MCF 10A (cell line): ENCODE measurements at regions of chr18 and their contacts with region 1.

Region 1: DNA sequence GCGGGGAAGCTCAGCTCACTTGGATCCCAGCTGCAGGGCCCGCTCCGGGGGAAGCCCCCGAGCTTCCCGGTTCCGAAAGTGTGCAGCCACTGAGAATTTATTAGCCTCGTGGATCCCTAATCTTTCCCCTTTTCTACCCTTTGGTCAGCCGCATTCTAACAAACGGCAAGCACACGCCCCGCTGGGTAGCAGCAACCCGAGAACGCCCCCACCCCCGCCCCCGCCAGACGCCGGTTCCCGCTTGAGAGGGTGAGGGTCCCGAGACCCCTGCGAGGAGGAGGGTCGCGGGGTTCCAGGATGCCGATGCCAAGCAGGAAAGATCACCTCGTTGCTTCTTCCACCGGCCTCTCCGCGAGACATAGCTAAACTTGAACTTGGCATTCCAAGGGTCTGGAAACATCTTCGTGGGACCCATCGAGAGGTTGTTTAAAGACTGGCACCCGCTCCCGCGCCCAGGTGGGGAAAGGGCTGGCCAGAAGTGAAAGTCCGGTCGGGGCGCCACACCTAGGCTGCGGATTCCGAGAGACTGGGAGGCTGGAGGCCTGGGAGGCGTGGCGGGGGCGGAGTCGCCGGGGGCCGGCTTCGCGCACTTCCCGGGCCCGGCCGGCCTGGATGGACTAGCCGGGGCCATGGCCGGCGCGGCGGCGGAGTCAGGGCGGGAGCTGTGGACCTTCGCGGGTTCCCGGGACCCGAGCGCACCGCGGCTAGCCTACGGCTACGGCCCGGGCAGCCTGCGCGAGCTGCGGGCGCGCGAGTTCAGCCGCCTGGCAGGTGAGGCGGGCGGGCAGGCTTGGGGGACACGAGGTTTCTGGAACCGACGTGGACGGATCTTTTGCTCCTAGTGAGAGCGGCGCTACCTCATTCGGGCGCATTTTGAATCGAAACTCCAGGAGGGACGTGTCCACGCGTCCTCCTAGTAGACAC is at the start of gene MOCOS:
- DNase-seq: peak; percentile 86
- H3K4me3 Mint-ChIP-seq: peak within 1 kb of the TSS; percentile 96
- H3K27ac Mint-ChIP-seq: peak within 1 kb of the TSS; percentile 89
- H3K4me1 Mint-ChIP-seq: peaks cover 34% of the 10 kb centered on the region
- H3K27me3 Mint-ChIP-seq: no peaks in the 10 kb centered on the region
- CTCF ChIP-seq: no peak
- total RNA-seq, gene MOCOS: 69.1 and 81.1 TPM in 2 replicates

Region 2: GRCh38 chr18:36162981-36163380 is 24.2 kb before region 1 on chr18:
- CTCF ChIA-PET with region 1: interaction called, 4 read pairs
- POLR2A ChIA-PET with region 1: interaction called, 6 read pairs
- intact Hi-C with region 1: loop called (anchors 2 kb)
- DNase-seq: no peak
- H3K4me3 Mint-ChIP-seq: no peak overlapping the region
- H3K27ac Mint-ChIP-seq: no peak overlapping the region
- H3K4me1 Mint-ChIP-seq: no peaks in the 10 kb centered on the region
- H3K27me3 Mint-ChIP-seq: no peaks in the 10 kb centered on the region
- CTCF ChIP-seq: no peak

Region 3: DNA sequence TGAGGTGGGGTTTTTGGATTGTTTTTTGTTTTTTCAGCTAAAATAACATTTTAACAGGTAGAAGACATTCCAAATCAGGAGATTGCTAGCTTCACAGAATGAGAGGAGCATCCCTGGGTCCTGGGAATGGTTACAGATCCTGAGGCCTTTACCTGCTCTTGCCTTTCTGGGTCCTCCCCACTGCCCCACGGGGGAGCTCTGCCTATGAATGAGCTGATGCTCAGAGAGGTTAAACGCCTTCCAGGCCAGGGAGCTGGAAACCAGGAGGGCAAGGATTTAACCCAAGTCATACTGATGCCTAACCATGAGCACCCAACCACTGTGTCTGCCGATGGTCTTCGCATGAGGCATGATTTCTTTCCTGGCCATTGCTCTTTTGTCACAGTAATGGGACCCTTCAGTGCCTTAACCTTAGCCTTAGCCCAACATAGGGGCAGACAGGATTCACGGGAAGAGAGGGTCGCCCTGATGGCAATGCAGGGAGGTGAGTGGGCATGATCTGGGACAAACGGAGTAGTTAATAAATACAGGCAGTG is 16.3 kb after region 1 on chr18:
- CTCF ChIA-PET with region 1: interaction called, 5 read pairs
- POLR2A ChIA-PET with region 1: interaction called, 15 read pairs
- intact Hi-C with region 1: no loop called
- DNase-seq: no peak
- H3K4me3 Mint-ChIP-seq: no peak overlapping the region
- H3K27ac Mint-ChIP-seq: no peak overlapping the region
- H3K4me1 Mint-ChIP-seq: no peaks in the 10 kb centered on the region
- H3K27me3 Mint-ChIP-seq: no peaks in the 10 kb centered on the region
- CTCF ChIP-seq: no peak

Region 4: DNA sequence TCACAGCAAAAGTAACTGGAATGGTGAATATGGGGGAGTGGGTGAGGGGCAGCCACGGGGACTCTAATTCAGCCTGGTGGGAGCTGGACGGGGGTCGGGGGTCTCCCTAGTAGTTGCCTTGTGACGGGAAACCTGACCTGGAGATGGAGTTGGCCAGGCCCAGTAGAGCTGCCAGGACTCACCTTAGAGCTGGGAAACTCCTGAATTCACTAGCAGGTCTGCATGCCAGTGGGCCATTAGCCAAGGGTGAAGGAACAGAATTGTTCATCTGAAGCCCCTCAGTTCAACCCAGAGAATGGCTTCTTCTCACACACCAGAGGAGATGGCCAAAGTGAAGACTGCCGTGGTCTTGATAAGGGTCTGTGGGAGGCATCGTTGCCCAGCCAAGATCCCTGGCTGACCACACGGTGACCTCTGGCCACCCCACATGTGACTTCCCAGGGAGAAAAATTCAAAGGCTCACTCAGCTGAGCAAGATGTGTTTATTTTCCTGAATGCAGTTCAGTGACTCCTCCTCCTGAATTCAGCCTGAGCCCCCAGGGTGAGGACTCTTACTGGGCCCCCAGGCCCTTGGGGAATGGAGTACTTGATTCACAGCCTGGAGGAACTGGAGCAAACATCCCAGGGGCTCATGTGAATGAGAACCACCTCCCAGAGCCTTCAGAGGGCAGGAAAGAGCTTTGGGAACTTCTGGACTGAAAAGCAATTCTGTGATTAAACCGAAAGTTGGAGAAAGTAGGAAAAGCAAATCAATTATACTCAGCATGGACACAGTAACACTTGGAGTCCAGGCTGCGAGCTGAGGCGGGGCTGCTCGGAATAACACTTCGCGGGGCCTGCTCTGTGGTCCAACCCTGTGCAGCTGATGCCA is 25.4 kb after region 1 on chr18:
- CTCF ChIA-PET with region 1: interaction called, 5 read pairs
- POLR2A ChIA-PET with region 1: interaction called, 13 read pairs
- intact Hi-C with region 1: no loop called
- DNase-seq: no peak
- H3K4me3 Mint-ChIP-seq: no peak overlapping the region
- H3K27ac Mint-ChIP-seq: no peak overlapping the region
- H3K4me1 Mint-ChIP-seq: no peaks in the 10 kb centered on the region
- H3K27me3 Mint-ChIP-seq: no peaks in the 10 kb centered on the region
- CTCF ChIP-seq: no peak